GM10248 (cell line): ENCODE measurements at regions of chr19 and their contacts with region 1.

Region 1: DNA sequence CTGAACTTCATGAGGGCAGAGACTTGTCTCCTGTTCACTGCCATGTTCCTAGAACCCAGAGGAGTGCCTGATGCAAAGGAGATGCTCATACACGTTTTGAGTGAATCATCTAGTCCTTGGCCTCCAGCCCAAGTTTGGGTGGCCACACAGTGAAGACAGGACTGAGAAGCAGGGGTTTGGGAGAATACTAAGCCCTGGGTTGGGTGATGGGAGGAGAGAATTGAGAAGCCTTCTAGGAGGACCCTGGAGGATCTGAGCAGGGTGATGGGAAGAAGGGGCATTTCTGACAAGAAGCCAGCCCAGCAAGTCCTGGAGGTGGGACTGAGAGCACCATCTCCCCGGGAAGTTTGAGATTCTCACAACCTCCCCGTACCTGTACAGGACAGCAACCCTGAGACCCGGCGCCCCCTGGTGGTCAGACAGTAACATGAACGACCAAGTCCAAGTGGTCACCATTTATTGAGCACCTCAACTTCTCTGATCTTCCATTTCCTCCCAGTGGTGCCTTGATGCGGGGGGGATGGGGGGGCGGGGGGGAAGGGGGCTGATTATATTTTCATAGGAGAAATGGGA is 11.0 kb downstream of the CTU1 start:
- DNase-seq: peak; percentile 81
- CTCF ChIP-seq: peak; percentile 77

Region 2: GRCh38 chr19:51020988-51021651 is 76.1 kb before region 1 on chr19:
- CTCF ChIA-PET with region 1: interaction called, 19 read pairs
- POLR2A ChIA-PET with region 1: no interaction called
- DNase-seq: no peak
- CTCF ChIP-seq: peak; percentile 63

Region 3: GRCh38 chr19:51079481-51080110 is 17.7 kb before region 1 on chr19:
- CTCF ChIA-PET with region 1: interaction called, 10 read pairs
- POLR2A ChIA-PET with region 1: no interaction called
- DNase-seq: no peak
- CTCF ChIP-seq: no peak

Region 4: DNA sequence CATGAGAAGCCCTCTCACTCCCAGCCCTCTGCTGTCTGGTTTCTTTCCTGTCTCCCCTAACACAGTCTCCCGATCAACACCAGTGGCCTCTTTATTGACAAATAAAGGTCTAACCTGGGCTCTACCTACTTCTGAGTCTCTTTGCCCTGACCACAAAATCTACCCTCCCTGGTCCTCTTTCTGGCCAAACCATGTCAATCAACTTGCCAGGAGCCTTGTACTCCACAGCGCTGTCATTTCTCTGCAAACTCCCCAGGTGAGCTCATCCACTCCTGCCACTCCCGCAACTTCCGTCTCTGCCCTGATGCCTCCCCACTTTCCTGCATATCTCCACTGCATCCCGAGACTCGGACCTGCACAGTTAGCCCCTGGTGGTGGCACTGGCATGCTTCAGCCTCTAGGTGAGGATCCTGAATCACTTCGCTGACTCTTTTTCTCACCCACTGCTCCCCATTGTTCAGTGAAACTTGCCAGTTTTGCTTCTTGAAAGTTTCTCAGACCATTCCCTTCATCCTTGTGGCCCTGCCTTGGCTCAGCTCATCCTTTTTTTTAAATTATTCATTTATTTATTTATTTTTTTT is 14.3 kb after region 1 on chr19:
- CTCF ChIA-PET with region 1: no interaction called
- POLR2A ChIA-PET with region 1: no interaction called
- DNase-seq: no peak
- CTCF ChIP-seq: no peak